WTC11 (cell line): ENCODE measurements at regions of chr14 and their contacts with region 1.

Region 1: GRCh38 chr14:64960762-64961278 is 11.3 kb downstream of the RAB15 start:
- DNase-seq: peak; percentile 66
- ATAC-seq: peak; percentile 79
- H3K4me3 Mint-ChIP-seq: no peak overlapping the region
- H3K27ac Mint-ChIP-seq: no peak overlapping the region; the same call in 1 of the 2 replicates
- H3K4me1 Mint-ChIP-seq: peaks cover 40% of the 10 kb centered on the region
- H3K27me3 Mint-ChIP-seq: no peaks in the 10 kb centered on the region
- CTCF ChIP-seq: peak; percentile 10; the same call in 1 of the 2 replicates

Region 2: DNA sequence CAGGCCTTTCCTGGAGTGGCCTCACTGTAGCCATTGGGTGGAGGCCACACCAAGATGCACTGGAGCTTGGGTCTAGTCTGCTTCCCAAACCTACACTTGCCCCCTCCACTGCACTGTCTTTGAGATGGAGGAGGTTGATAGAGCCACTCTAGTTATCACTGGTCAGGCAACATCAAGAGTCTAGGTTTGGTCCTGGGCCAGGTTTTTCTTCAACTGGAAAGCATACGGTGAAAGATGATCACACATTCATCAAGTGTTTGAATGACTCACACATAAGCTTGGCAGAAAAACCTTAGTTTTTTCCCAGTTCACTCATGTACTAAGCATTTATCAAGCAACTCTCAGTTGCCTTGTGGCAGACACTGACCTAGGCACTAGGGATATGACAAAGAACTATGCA is 172.2 kb before region 1 on chr14:
- CTCF ChIA-PET with region 1: no interaction called
- POLR2A ChIA-PET with region 1: no interaction called
- DNase-seq: no peak
- ATAC-seq: no peak
- H3K4me3 Mint-ChIP-seq: no peak overlapping the region
- H3K27ac Mint-ChIP-seq: no peak overlapping the region
- H3K4me1 Mint-ChIP-seq: peaks cover 14% of the 10 kb centered on the region
- H3K27me3 Mint-ChIP-seq: no peaks in the 10 kb centered on the region
- CTCF ChIP-seq: no peak

Region 3: DNA sequence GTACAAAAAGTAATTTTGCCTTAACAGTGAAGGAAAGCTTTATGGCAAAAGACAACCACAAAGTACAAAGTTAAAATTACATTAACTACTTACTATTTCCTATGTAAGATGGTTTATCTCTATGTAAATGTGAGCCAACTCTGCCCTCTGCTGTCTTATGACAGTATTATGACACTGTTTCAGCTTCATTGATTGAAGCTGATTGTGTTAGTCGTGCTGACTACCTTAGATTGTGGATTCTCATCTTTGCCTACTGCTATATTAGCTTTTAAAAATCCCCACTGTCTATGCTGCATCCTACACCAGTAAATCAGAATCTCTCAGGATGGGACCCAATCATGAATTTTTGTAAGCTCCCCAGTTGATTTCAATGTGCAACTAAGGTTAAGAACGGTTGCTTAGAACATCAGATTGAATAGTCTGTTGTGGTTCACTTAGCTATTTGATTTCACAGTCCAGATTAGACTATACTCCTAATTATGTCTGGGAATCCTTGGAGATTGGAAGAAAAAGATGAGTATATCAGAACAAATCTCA is 68.9 kb before region 1 on chr14:
- CTCF ChIA-PET with region 1: no interaction called
- POLR2A ChIA-PET with region 1: no interaction called
- DNase-seq: no peak
- ATAC-seq: peak; percentile 78
- H3K4me3 Mint-ChIP-seq: no peak overlapping the region
- H3K27ac Mint-ChIP-seq: no peak overlapping the region
- H3K4me1 Mint-ChIP-seq: no peaks in the 10 kb centered on the region
- H3K27me3 Mint-ChIP-seq: peaks cover 3% of the 10 kb centered on the region; the same call in 1 of the 2 replicates
- CTCF ChIP-seq: peak; percentile 29; the same call in 1 of the 2 replicates

Region 4: GRCh38 chr14:64942531-64943111 is 18.2 kb before region 1 on chr14 and contains the start of gene GPX2:
- CTCF ChIA-PET with region 1: interaction called, 12 read pairs
- POLR2A ChIA-PET with region 1: interaction called, 4 read pairs
- DNase-seq: no peak
- ATAC-seq: peak; percentile 12
- H3K4me3 Mint-ChIP-seq: no peak within 1 kb of the TSS
- H3K27ac Mint-ChIP-seq: no peak within 1 kb of the TSS
- H3K4me1 Mint-ChIP-seq: peaks cover 24% of the 10 kb centered on the region
- H3K27me3 Mint-ChIP-seq: no peaks in the 10 kb centered on the region
- CTCF ChIP-seq: no peak
- total RNA-seq, gene GPX2: 0.80 to 1.5 TPM (median 1.0 TPM) in 3 replicates

Region 5: GRCh38 chr14:64971943-64972791 is 11.3 kb after region 1 on chr14 and contains the start of gene RAB15:
- CTCF ChIA-PET with region 1: interaction called, 26 read pairs
- POLR2A ChIA-PET with region 1: no interaction called
- DNase-seq: peak; percentile 43
- ATAC-seq: peak; percentile 62
- H3K4me3 Mint-ChIP-seq: peak within 1 kb of the TSS; percentile 78
- H3K27ac Mint-ChIP-seq: no peak within 1 kb of the TSS
- H3K4me1 Mint-ChIP-seq: peaks cover 72% of the 10 kb centered on the region
- H3K27me3 Mint-ChIP-seq: no peaks in the 10 kb centered on the region; the same call in 1 of the 2 replicates
- CTCF ChIP-seq: no peak
- total RNA-seq, gene RAB15: 38.4 to 49.1 TPM (median 38.6 TPM) in 3 replicates